ENCODE measurements at regions of chr16 and their contacts with region 1.

Region 1: DNA sequence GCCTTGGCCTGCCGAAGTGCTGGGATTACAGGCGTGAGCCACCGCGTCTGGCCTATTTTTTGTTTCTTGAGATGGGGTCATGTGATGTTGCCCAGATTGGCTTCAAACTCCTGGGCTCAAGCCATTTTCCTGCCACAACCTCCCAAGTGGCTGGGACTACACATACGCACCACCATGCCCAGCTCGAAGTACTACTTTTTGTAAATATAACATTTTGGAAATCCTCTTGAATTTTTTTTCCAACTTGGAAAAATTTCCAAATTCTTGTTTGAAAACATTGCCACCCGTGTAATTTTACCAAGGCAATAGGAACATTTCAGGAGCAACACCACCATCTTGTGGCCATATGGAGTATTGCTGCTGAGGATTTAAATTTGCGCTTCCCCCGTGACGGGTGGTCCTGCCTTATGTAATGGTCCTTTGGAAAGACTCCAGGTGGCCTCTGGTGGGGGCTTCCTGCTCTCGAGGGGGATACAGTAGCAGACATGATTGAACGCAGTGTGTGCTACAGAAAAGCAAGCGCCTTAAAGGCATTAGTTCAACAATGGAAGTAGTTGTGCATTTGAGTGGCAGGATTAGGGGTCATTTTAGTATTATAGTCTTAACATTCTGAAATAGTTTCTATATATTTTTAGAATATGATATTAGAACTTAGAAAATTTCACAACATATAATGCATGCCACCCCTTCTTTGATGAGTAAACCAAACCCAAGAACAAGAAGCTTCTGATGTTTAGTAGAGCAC is 8.0 kb downstream of the FLYWCH1 start:
- H3K4me3 Mint-ChIP-seq: no peak overlapping the region
- H3K27ac Mint-ChIP-seq: peak overlapping the region; percentile 34
- H3K4me1 Mint-ChIP-seq: peaks cover 25% of the 10 kb centered on the region
- H3K27me3 Mint-ChIP-seq: no peaks in the 10 kb centered on the region

Region 2: GRCh38 chr16:2838928-2839327 is 80.8 kb before region 1 on chr16:
- intact Hi-C with region 1: loop called (anchors 1 kb)
- H3K4me3 Mint-ChIP-seq: no peak overlapping the region
- H3K27ac Mint-ChIP-seq: no peak overlapping the region
- H3K4me1 Mint-ChIP-seq: peaks cover 34% of the 10 kb centered on the region
- H3K27me3 Mint-ChIP-seq: peaks cover 32% of the 10 kb centered on the region

Region 3: DNA sequence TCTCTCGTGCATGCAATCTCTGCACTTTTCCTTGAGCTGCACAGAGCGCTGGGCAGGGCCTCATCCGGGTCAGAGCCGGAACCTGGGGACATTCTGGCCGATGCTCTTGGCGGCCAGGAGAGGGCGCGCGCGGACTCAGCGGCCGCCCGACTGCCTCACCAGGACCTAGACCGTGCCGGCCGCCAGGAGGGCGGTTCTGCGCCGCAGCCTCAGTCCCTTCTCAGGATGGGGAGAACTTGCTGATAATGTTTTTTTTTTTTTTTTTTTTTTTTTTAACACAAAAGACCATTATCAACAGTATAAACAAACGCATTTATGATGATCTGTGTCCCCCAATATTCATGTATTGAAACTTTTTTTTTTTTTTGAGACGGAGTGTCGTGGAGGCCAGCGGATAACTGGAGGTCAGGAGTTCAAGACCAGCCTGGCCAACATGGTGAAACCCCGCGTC is 44.7 kb before region 1 on chr16:
- intact Hi-C with region 1: loop called (anchors 1 kb)
- H3K4me3 Mint-ChIP-seq: no peak overlapping the region
- H3K27ac Mint-ChIP-seq: no peak overlapping the region
- H3K4me1 Mint-ChIP-seq: no peaks in the 10 kb centered on the region
- H3K27me3 Mint-ChIP-seq: peaks cover 10% of the 10 kb centered on the region

Region 4: GRCh38 chr16:2905431-2906387 is 14.0 kb before region 1 on chr16:
- intact Hi-C with region 1: loop called (anchors 1 kb)
- H3K4me3 Mint-ChIP-seq: peak overlapping the region; percentile 79
- H3K27ac Mint-ChIP-seq: peak overlapping the region; percentile 92
- H3K4me1 Mint-ChIP-seq: peaks cover 26% of the 10 kb centered on the region
- H3K27me3 Mint-ChIP-seq: peaks cover 4% of the 10 kb centered on the region

Measured in dendritic cell treated with granulocyte-macrophage colony-stimulating factor and Interleukin-4, amounts not matched to agents 40 ng/mL and 50 ng/mL, for 4 days (primary cell).